CD8-positive, alpha-beta T cell (primary cell): ENCODE measurements at regions of chr9 and their contacts with region 1.

Region 1: DNA sequence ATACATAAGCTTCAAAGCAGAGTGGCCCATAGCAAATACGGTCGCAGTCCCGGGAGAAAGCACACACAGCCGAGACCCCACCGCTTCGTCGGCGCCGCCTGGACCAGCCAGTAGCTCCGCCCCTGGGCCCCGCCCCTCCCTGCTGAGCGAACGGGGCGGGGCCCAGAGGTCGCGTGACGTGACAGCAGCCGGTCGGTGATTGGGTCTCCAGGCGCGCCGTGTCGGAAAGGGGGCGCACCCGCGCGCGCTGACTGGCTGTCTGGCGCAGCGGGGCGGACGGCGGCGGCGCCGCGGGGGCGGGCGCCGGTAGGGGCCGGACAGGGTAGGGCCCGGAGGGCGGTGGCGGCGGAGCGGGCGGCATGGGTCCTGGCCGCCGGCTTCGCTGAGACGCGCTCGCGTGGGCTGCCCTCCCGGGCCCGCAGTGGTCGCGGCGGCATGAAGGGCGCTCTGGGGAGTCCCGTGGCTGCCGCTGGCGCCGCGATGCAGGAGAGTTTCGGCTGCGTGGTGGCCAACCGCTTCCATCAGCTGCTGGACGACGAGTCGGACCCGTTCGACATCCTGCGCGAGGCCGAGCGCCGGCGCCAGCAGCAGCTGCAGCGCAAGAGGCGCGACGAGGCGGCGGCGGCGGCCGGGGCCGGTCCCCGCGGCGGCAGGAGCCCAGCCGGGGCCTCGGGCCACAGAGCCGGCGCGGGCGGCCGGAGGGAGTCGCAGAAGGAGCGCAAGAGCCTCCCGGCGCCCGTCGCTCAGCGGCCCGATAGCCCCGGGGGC is at the start of gene HABP4:
- DNase-seq: peak; percentile 89 to 97 (median 96)
- ATAC-seq: peak; percentile 93
- H3K4me3 ChIP-seq: peak within 1 kb of the TSS; percentile 62 to 65
- H3K4me3 Mint-ChIP-seq: peak within 1 kb of the TSS; percentile 95
- H3K27ac ChIP-seq: peak within 1 kb of the TSS; percentile 16 to 59
- H3K27ac Mint-ChIP-seq: peak within 1 kb of the TSS; percentile 94
- H3K4me1 ChIP-seq: peaks cover 12% of the 10 kb centered on the region
- H3K4me1 Mint-ChIP-seq: peaks cover 24% of the 10 kb centered on the region
- H3K27me3 ChIP-seq: no peaks in the 10 kb centered on the region
- H3K27me3 Mint-ChIP-seq: no peaks in the 10 kb centered on the region
- CTCF ChIP-seq: no peak
- total RNA-seq, gene HABP4: 31.9 to 32.6 TPM

Region 2: GRCh38 chr9:96383165-96383942 is 66.7 kb before region 1 on chr9 and contains the start of gene SLC35D2:
- CTCF ChIA-PET with region 1: no interaction called
- POLR2A ChIA-PET with region 1: no interaction called
- intact Hi-C with region 1: loop called in 1 of 2 experiments (anchors 1 kb)
- DNase-seq: peak in 7 of 9 experiments; percentile 1 to 62 (median 15)
- ATAC-seq: peak; percentile 63
- H3K4me3 ChIP-seq: peak within 1 kb of the TSS; percentile 54 to 60
- H3K4me3 Mint-ChIP-seq: peak within 1 kb of the TSS; percentile 90
- H3K27ac ChIP-seq: peak within 1 kb of the TSS in 1 of 2 experiments; percentile 43
- H3K27ac Mint-ChIP-seq: peak within 1 kb of the TSS; percentile 85
- H3K4me1 ChIP-seq: peaks cover 18% of the 10 kb centered on the region
- H3K4me1 Mint-ChIP-seq: peaks cover 36% of the 10 kb centered on the region
- H3K27me3 ChIP-seq: no peaks in the 10 kb centered on the region
- H3K27me3 Mint-ChIP-seq: no peaks in the 10 kb centered on the region
- CTCF ChIP-seq: no peak
- total RNA-seq, gene SLC35D2: 18.5 to 20.5 TPM

Region 3: GRCh38 chr9:96425500-96426169 is 24.4 kb before region 1 on chr9:
- CTCF ChIA-PET with region 1: no interaction called
- POLR2A ChIA-PET with region 1: no interaction called
- intact Hi-C with region 1: no loop called
- DNase-seq: peak in 2 of 9 experiments; percentile 44 to 69
- ATAC-seq: no peak
- H3K4me3 ChIP-seq: no peak overlapping the region
- H3K4me3 Mint-ChIP-seq: no peak overlapping the region
- H3K27ac ChIP-seq: peak overlapping the region in 1 of 2 experiments; percentile 34
- H3K27ac Mint-ChIP-seq: no peak overlapping the region
- H3K4me1 ChIP-seq: peaks cover 2% of the 10 kb centered on the region
- H3K4me1 Mint-ChIP-seq: peaks cover 7% of the 10 kb centered on the region
- H3K27me3 ChIP-seq: no peaks in the 10 kb centered on the region
- H3K27me3 Mint-ChIP-seq: no peaks in the 10 kb centered on the region
- CTCF ChIP-seq: no peak

Region 4: DNA sequence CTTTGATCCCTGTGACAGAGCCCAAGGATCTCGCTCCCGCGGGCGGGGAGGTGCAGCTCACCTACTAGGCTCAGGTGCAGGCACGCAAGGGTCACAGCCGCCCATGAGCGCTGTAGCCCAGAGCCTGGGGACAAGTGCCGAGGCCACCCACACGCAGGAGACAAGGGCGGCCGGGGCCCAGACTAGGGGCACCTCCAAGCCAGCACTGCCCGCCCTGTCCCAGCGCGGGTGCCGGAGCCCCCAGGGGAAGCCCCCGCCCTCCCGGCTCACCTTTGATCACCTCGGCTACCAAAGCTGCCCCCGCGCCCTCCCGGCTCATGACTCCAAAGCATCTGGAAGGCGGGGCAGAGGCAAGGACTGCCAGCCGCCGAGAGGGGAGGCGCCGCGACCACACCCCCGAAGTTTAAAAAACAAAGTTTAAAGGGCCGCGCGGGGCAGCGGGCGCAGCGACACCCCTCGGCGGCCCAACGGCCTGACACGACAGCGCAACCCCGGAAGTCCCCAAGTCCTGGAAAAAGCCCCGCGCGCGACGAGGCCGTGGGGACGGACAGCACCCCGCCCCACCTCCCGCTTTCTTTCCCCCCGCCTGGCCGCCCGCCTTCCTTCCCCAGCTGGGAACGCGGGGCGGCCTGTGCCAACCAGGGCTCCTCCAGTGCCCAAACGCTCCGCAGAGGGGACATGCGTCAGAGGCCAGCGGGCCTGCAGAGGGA is 116.6 kb after region 1 on chr9:
- CTCF ChIA-PET with region 1: interaction called, 3 read pairs
- POLR2A ChIA-PET with region 1: interaction called, 9 read pairs
- intact Hi-C with region 1: loop called (anchors 1 to 5 kb)
- DNase-seq: peak; percentile 57 to 92 (median 82)
- ATAC-seq: peak; percentile 86
- H3K4me3 ChIP-seq: peak overlapping the region; percentile 76 to 88
- H3K4me3 Mint-ChIP-seq: peak overlapping the region; percentile 86
- H3K27ac ChIP-seq: peak overlapping the region; percentile 87 to 91
- H3K27ac Mint-ChIP-seq: peak overlapping the region; percentile 84
- H3K4me1 ChIP-seq: peaks cover 24% of the 10 kb centered on the region
- H3K4me1 Mint-ChIP-seq: peaks cover 27% of the 10 kb centered on the region
- H3K27me3 ChIP-seq: no peaks in the 10 kb centered on the region
- H3K27me3 Mint-ChIP-seq: peaks cover 12% of the 10 kb centered on the region
- CTCF ChIP-seq: peak; percentile 58

Region 5: GRCh38 chr9:96667361-96667728 is 217.3 kb after region 1 on chr9:
- CTCF ChIA-PET with region 1: no interaction called
- POLR2A ChIA-PET with region 1: no interaction called
- intact Hi-C with region 1: loop called in 1 of 2 experiments (anchors 5 kb)
- DNase-seq: no peak
- ATAC-seq: no peak
- H3K4me3 ChIP-seq: no peak overlapping the region
- H3K4me3 Mint-ChIP-seq: no peak overlapping the region
- H3K27ac ChIP-seq: no peak overlapping the region
- H3K27ac Mint-ChIP-seq: no peak overlapping the region
- H3K4me1 ChIP-seq: no peaks in the 10 kb centered on the region
- H3K4me1 Mint-ChIP-seq: no peaks in the 10 kb centered on the region
- H3K27me3 ChIP-seq: no peaks in the 10 kb centered on the region
- H3K27me3 Mint-ChIP-seq: peaks cover 23% of the 10 kb centered on the region
- CTCF ChIP-seq: no peak

Region 6: GRCh38 chr9:96758845-96759673 is 309.0 kb after region 1 on chr9:
- CTCF ChIA-PET with region 1: no interaction called
- POLR2A ChIA-PET with region 1: no interaction called
- intact Hi-C with region 1: no loop called
- DNase-seq: no peak
- ATAC-seq: no peak
- H3K4me3 ChIP-seq: no peak overlapping the region
- H3K4me3 Mint-ChIP-seq: no peak overlapping the region
- H3K27ac ChIP-seq: no peak overlapping the region
- H3K27ac Mint-ChIP-seq: no peak overlapping the region
- H3K4me1 ChIP-seq: no peaks in the 10 kb centered on the region
- H3K4me1 Mint-ChIP-seq: no peaks in the 10 kb centered on the region
- H3K27me3 ChIP-seq: no peaks in the 10 kb centered on the region
- H3K27me3 Mint-ChIP-seq: no peaks in the 10 kb centered on the region
- CTCF ChIP-seq: no peak

Region 7: DNA sequence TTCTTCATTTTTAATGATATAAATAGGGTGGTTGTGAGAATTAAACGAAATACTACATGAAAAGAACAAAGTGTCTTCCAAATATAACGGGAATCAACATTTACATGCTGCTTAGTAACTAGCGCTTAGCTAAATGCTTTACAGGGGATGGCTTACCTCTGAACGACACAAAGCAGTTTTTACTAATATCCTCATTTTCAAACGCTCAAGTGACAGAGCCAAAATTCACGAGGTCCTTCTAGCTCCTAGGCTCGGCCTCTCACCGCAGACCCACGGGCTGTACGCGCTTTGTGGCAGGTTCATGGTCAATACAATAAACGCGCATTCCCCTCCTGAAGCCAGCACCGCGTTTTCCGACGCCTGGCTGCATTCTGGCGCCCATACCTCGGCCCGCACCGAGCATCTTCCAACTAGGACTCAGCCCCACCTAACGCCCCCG is 327.4 kb after region 1 on chr9:
- CTCF ChIA-PET with region 1: no interaction called
- POLR2A ChIA-PET with region 1: no interaction called
- intact Hi-C with region 1: loop called in 1 of 2 experiments (anchors 5 kb)
- DNase-seq: no peak
- ATAC-seq: no peak
- H3K4me3 ChIP-seq: peak overlapping the region; percentile 54 to 70
- H3K4me3 Mint-ChIP-seq: peak overlapping the region; percentile 97
- H3K27ac ChIP-seq: peak overlapping the region; percentile 76 to 77
- H3K27ac Mint-ChIP-seq: peak overlapping the region; percentile 99
- H3K4me1 ChIP-seq: peaks cover 14% of the 10 kb centered on the region
- H3K4me1 Mint-ChIP-seq: peaks cover 52% of the 10 kb centered on the region
- H3K27me3 ChIP-seq: no peaks in the 10 kb centered on the region
- H3K27me3 Mint-ChIP-seq: no peaks in the 10 kb centered on the region
- CTCF ChIP-seq: no peak